Activated naive CD4-positive, alpha-beta T cell treated with anti-CD3 and anti-CD28 coated beads for 36 hours (primary cell): ENCODE measurements at regions of chr1 and their contacts with region 1.

Region 1: GRCh38 chr1:215526553-215527151 is 40.5 kb upstream of the KCTD3 start:
- DNase-seq: no peak
- H3K4me3 Mint-ChIP-seq: no peak overlapping the region
- H3K27ac Mint-ChIP-seq: no peak overlapping the region
- H3K4me1 Mint-ChIP-seq: peaks cover 1% of the 10 kb centered on the region
- H3K27me3 Mint-ChIP-seq: peaks cover 7% of the 10 kb centered on the region

Region 2: GRCh38 chr1:214584805-214585766 is 941.6 kb before region 1 on chr1:
- CTCF ChIA-PET with region 1: no interaction called
- intact Hi-C with region 1: loop called (anchors 10 kb)
- DNase-seq: no peak
- H3K4me3 Mint-ChIP-seq: no peak overlapping the region
- H3K27ac Mint-ChIP-seq: no peak overlapping the region
- H3K4me1 Mint-ChIP-seq: peaks cover 2% of the 10 kb centered on the region
- H3K27me3 Mint-ChIP-seq: no peaks in the 10 kb centered on the region

Region 3: DNA sequence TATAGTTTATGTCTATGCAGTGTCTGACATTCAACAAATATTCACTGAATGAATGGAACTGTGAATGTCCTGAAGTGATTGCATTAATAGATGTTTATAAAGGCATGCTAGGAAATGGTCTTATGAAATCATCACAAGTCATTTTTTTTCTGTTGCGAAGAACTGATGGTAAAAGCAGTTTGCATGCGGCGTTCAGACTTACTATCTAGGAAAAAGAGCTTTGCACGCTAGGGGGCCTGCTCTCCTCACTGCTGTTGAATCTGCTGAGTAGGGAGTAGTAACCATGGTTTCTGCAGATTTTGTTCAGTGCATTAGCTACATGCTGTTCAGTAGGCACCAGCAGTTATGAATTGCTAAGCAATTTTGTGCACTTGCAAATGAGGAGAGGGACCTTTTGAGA is 865.8 kb before region 1 on chr1:
- CTCF ChIA-PET with region 1: no interaction called
- intact Hi-C with region 1: loop called (anchors 1 kb)
- DNase-seq: peak; percentile 36
- H3K4me3 Mint-ChIP-seq: no peak overlapping the region
- H3K27ac Mint-ChIP-seq: no peak overlapping the region
- H3K4me1 Mint-ChIP-seq: peaks cover 3% of the 10 kb centered on the region
- H3K27me3 Mint-ChIP-seq: no peaks in the 10 kb centered on the region

Region 4: DNA sequence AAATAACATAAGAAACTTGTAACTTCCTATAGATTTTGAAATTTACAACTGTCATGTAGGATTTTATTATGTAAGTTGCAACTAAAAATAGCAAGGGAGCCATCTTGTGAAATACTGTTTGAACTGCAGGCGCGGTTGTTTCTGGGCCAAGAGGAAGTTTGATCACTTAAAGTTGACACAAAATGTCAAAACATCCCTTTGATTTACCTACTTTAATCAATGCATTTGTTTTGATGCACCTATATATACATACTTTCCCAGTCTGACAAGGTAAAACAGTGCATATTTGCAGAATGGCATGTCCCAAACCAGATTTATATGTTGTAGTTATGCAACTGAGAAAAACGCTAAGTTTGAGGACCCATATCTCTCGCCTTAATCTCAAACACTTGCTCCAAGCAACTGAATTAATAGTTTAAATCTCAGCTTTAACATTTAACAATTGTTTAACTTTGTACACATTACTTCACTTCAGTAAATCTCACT is 380.3 kb before region 1 on chr1:
- CTCF ChIA-PET with region 1: no interaction called
- intact Hi-C with region 1: loop called (anchors 10 kb)
- DNase-seq: peak; percentile 36
- H3K4me3 Mint-ChIP-seq: no peak overlapping the region
- H3K27ac Mint-ChIP-seq: no peak overlapping the region
- H3K4me1 Mint-ChIP-seq: peaks cover 3% of the 10 kb centered on the region
- H3K27me3 Mint-ChIP-seq: no peaks in the 10 kb centered on the region

Region 5: DNA sequence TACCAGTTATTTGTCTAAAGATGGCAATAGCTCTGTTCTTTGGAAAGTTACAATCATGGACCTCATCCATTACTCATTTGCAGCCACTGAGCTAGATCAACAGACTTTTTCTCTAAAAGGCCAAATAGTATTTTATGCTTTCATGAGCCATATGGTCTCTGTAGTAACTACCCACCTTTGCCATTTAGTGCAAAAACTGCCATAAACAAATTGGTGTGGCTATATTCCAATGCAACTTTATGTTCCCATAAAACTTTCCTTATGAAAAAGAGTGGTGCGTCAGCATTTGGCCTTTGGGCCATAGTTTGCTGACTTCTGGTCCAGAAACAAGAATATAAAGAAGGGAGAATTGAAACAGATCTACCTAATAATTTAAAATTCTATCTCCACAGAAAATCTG is 20.4 kb after region 1 on chr1:
- CTCF ChIA-PET with region 1: no interaction called
- intact Hi-C with region 1: no loop called
- DNase-seq: no peak
- H3K4me3 Mint-ChIP-seq: no peak overlapping the region
- H3K27ac Mint-ChIP-seq: no peak overlapping the region
- H3K4me1 Mint-ChIP-seq: no peaks in the 10 kb centered on the region
- H3K27me3 Mint-ChIP-seq: peaks cover 9% of the 10 kb centered on the region